Naive thymus-derived CD4-positive, alpha-beta T cell (primary cell): ENCODE measurements at regions of chr22 and their contacts with region 1.

Region 1: GRCh38 chr22:41666661-41667258 is 21.9 kb downstream of the SNU13 start:
- DNase-seq: peak; percentile 88 to 97 (median 95)
- ATAC-seq: peak; percentile 98
- H3K4me3 ChIP-seq: peak overlapping the region; percentile 44
- H3K4me3 Mint-ChIP-seq: peak overlapping the region; percentile 75 to 87 (median 82)
- H3K27ac ChIP-seq: peak overlapping the region; percentile 72
- H3K27ac Mint-ChIP-seq: peak overlapping the region; percentile 91 to 99 (median 97)
- H3K4me1 ChIP-seq: peaks cover 7% of the 10 kb centered on the region in 2 donors
- H3K4me1 Mint-ChIP-seq: peaks cover 0 to 25% (median 10%) of the 10 kb centered on the region in 7 donors
- H3K27me3 ChIP-seq: no peaks in the 10 kb centered on the region
- H3K27me3 Mint-ChIP-seq: no peaks in the 10 kb centered on the region

Region 2: DNA sequence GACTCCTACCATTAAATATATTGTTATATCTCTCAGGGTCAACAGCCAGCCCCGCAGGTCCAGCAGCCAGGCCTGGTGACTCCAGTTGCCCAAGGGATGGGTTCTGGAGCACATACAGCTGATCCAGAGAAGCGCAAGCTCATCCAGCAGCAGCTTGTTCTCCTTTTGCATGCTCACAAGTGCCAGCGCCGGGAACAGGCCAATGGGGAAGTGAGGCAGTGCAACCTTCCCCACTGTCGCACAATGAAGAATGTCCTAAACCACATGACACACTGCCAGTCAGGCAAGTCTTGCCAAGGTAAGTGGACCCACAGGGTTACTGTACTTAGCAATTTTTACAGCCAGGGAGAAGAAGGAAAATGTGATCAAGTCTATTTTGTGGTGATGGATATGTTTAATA is 539.3 kb before region 1 on chr22:
- CTCF ChIA-PET with region 1: no interaction called
- POLR2A ChIA-PET with region 1: no interaction called
- intact Hi-C with region 1: no loop called
- DNase-seq: no peak
- ATAC-seq: peak; percentile 63
- H3K4me3 ChIP-seq: no peak overlapping the region
- H3K4me3 Mint-ChIP-seq: no peak overlapping the region
- H3K27ac ChIP-seq: no peak overlapping the region
- H3K27ac Mint-ChIP-seq: no peak overlapping the region
- H3K4me1 ChIP-seq: no peaks in the 10 kb centered on the region
- H3K4me1 Mint-ChIP-seq: peaks cover 9 to 22% (median 12%) of the 10 kb centered on the region in 7 donors
- H3K27me3 ChIP-seq: no peaks in the 10 kb centered on the region
- H3K27me3 Mint-ChIP-seq: no peaks in the 10 kb centered on the region

Region 3: DNA sequence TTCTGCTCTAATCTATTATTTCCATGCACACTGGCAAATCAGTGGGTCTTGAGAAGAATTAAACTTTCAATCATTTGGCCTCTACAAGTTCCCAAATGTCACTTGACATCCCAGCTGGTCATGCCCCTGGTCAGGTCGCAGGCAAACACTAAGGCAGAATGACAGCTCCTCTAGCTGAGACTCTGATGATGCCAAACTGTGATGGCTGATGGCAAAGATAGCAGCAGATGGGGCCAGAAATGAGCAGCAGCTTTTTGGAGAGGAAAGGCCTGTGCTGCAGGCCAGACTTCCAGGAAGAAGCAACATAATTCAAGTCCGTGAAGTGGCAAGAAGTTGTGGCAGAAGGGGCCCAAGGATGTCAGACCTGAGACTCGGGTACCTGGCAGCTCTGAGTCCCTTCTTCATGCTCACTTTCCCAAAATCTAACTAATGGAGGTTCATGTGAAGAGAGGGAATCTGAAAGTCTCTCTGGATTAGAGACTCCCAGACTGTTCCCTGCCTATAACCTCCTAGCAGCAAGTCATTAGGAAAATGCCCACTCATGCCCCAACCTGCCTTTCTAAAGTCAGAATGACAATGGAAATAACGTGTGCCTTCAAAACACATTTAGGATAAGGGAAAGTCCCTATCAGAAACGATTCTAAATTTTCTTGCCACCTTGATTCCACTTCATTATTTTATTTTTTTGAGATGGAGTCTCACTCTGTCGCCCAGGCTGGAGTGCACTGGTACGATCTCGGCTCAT is 67.7 kb before region 1 on chr22:
- CTCF ChIA-PET with region 1: no interaction called
- POLR2A ChIA-PET with region 1: no interaction called
- intact Hi-C with region 1: no loop called
- DNase-seq: no peak
- ATAC-seq: no peak
- H3K4me3 ChIP-seq: no peak overlapping the region
- H3K4me3 Mint-ChIP-seq: no peak overlapping the region
- H3K27ac ChIP-seq: no peak overlapping the region
- H3K27ac Mint-ChIP-seq: no peak overlapping the region
- H3K4me1 ChIP-seq: peaks cover 0 to 12% of the 10 kb centered on the region in 2 donors
- H3K4me1 Mint-ChIP-seq: peaks cover 7 to 26% (median 15%) of the 10 kb centered on the region in 7 donors
- H3K27me3 ChIP-seq: no peaks in the 10 kb centered on the region
- H3K27me3 Mint-ChIP-seq: peaks cover 0 to 5% (median 0%) of the 10 kb centered on the region in 5 donors

Region 4: GRCh38 chr22:41682033-41682807 is 15.5 kb after region 1 on chr22:
- CTCF ChIA-PET with region 1: interaction called, 5 read pairs
- POLR2A ChIA-PET with region 1: interaction called, 30 read pairs
- intact Hi-C with region 1: loop called in 1 of 2 experiments (anchors 1 kb)
- DNase-seq: peak; percentile 77 to 88 (median 85)
- ATAC-seq: peak; percentile 93
- H3K4me3 ChIP-seq: peak overlapping the region; percentile 91
- H3K4me3 Mint-ChIP-seq: peak overlapping the region; percentile 91 to 99 (median 99)
- H3K27ac ChIP-seq: peak overlapping the region; percentile 92
- H3K27ac Mint-ChIP-seq: peak overlapping the region; percentile 94 to 99 (median 98)
- H3K4me1 ChIP-seq: peaks cover 3 to 14% of the 10 kb centered on the region in 2 donors
- H3K4me1 Mint-ChIP-seq: peaks cover 14 to 70% (median 45%) of the 10 kb centered on the region in 7 donors
- H3K27me3 ChIP-seq: no peaks in the 10 kb centered on the region
- H3K27me3 Mint-ChIP-seq: no peaks in the 10 kb centered on the region